ENCODE measurements at regions of chr1 and their contacts with region 1.

Region 1: DNA sequence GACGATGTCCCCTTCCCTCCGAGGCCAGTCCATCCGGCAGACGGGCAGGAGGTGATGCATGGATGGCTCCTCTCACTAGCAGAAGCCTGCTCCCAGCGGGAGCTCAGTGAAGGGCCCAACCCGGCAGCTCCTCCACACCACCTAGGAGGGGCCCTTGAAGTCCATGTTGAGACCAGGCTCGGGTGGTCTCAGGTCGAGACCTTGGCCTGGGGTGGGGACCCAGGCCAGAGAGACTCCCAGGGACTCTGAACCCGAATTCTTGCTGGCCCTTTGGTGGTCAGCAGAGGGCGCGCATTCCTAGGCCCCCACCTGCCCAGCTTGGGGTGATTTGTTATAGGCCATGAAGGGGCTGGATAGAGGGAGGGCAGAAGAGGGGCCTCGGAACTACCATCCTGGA is 642 bp upstream of the NT5C1A start:
- DNase-seq: peak in 1 of 2 experiments; percentile 81
- H3K4me3 ChIP-seq: peak overlapping the region; percentile 27 to 61 (median 36); a peak in 5 of 8 replicates
- H3K27ac ChIP-seq: no peak overlapping the region
- H3K4me1 ChIP-seq: peaks cover 0 to 11% (median 5%) of the 10 kb centered on the region in 4 experiments; a peak in 5 of 7 replicates
- H3K27me3 ChIP-seq: peaks cover 67 to 93% (median 87%) of the 10 kb centered on the region in 4 experiments
- CTCF ChIP-seq: peak; percentile 67 to 81 (median 74)
- EP300 ChIP-seq: no peak
- POLR2A ChIP-seq: no peak
- RAD21 ChIP-seq: peak; percentile 51 to 69

Region 2: GRCh38 chr1:39609618-39610331 is 62.8 kb before region 1 on chr1:
- CTCF ChIA-PET with region 1: interaction called, 67 read pairs
- POLR2A ChIA-PET with region 1: interaction called, 3 read pairs
- DNase-seq: peak; percentile 58 to 97
- H3K4me3 ChIP-seq: peak overlapping the region; percentile 59 to 71 (median 60)
- H3K27ac ChIP-seq: no peak overlapping the region
- H3K4me1 ChIP-seq: peaks cover 0 to 5% (median 0%) of the 10 kb centered on the region in 4 experiments; a peak in 2 of 7 replicates
- H3K27me3 ChIP-seq: peaks cover 0 to 13% (median 8%) of the 10 kb centered on the region in 4 experiments; a peak in 6 of 7 replicates
- CTCF ChIP-seq: peak; percentile 90 to 97 (median 91)
- EP300 ChIP-seq: no peak
- POLR2A ChIP-seq: no peak
- RAD21 ChIP-seq: peak; percentile 46 to 62

Region 3: DNA sequence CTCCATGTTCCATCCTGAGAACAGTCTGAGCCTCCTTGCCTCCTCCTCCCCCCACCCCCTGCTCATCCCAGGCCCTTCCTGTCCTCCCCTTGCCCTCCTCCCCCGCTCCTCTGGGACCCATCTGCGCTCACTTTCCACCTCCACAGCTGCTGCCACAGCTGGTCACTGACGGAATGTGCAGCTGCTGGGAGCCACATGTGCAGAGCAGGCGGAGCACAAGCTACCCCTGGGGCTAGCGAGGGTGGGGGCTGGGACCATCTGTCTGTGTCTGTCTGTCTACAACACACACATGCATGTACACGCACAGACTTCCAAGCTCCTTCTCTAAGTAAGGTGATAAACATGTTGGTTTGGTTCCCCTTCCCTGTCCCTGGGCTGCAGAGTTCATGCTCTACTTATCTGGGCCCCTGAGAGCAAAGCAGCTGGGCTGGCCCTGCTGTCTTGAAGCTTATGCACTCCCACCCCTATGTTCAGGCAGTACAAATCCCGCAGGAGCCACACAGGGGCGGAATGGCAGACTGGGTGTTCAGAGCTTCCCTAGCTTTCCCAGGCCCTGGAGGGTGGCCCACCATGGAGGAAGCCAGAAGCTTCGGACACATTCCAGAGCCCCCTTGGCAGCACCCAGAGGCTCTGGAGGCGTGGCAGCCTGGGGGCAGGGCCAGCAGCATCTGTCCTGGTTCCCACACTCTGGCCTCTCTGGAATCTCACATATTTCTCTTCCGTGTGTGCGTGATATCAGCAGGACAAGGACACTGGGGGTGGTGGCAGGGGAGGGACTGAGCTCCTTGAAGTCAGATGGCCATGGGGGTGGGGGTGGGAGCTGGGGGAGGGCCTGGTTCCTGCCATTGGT is 26.1 kb before region 1 on chr1:
- CTCF ChIA-PET with region 1: interaction called, 14 read pairs
- POLR2A ChIA-PET with region 1: no interaction called
- DNase-seq: peak in 1 of 2 experiments; percentile 61
- H3K4me3 ChIP-seq: no peak overlapping the region
- H3K27ac ChIP-seq: no peak overlapping the region
- H3K4me1 ChIP-seq: peaks cover 0 to 6% (median 5%) of the 10 kb centered on the region in 4 experiments; a peak in 6 of 7 replicates
- H3K27me3 ChIP-seq: peaks cover 0 to 10% (median 1%) of the 10 kb centered on the region in 4 experiments; a peak in 2 of 7 replicates
- CTCF ChIP-seq: peak in 2 of 3 experiments; percentile 36 to 39; a peak in 3 of 4 replicates
- EP300 ChIP-seq: no peak
- POLR2A ChIP-seq: no peak
- RAD21 ChIP-seq: no peak

Region 4: DNA sequence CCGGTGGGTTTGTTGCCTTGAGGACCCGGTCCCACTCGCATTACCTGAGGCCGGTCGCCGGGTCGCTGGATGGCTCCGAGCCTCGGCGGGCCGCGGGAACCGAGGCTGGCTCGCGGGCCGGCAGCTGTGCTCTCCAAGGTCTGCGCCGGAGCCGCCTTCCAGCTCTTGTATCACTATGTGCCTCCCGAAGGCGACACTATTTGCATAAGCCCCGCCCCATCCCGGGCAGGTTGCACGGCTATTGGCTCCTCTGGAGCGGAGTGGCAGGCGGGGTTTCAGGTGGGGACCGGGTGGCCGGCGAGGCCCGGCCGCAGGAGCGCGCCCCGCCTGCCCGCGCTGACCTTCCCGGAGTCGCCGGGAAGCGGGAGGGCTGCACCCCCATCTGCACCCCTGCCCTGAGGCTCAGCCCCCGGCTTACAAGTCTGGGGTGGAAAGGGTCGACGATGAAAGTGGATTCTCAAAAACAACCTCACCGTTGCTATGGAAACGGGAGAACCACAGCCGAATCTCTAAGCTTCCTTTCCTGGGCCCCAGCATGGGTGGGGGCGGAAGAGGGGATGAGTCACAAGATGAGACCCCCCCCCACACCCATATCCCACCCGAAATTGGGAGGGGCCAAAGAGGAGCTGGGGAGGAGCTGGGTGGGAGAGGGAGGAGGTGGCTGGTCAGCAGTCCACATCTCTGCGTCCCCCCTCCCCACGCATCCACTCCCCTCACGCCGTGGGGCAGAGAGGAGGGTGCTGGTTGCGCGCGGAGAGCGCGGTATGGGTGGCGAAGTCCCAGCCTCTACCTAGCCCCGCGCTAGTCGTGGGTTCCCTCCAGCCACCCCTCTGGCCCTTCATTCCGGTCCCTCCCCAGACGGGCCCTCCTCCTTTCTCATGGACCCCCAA is 19.0 kb after region 1 on chr1 and contains the start of gene HPCAL4:
- CTCF ChIA-PET with region 1: interaction called, 40 read pairs
- POLR2A ChIA-PET with region 1: interaction called, 15 read pairs
- DNase-seq: peak; percentile 77 to 97
- H3K4me3 ChIP-seq: peak within 1 kb of the TSS; percentile 8 to 56 (median 22); a peak in 7 of 8 replicates
- H3K27ac ChIP-seq: no peak within 1 kb of the TSS
- H3K4me1 ChIP-seq: peaks cover 0 to 19% (median 7%) of the 10 kb centered on the region in 4 experiments; a peak in 5 of 7 replicates
- H3K27me3 ChIP-seq: peaks cover 75 to 99% (median 87%) of the 10 kb centered on the region in 4 experiments
- CTCF ChIP-seq: no peak
- EP300 ChIP-seq: no peak
- POLR2A ChIP-seq: no peak
- RAD21 ChIP-seq: no peak
- total RNA-seq, gene HPCAL4: 0.46 and 0.54 TPM in 2 replicates

Region 5: GRCh38 chr1:39711104-39711965 is 38.8 kb after region 1 on chr1:
- CTCF ChIA-PET with region 1: interaction called, 78 read pairs
- POLR2A ChIA-PET with region 1: interaction called, 5 read pairs
- DNase-seq: no peak
- H3K4me3 ChIP-seq: no peak overlapping the region
- H3K27ac ChIP-seq: no peak overlapping the region
- H3K4me1 ChIP-seq: peaks cover 3 to 15% (median 4%) of the 10 kb centered on the region in 4 experiments; a peak in 5 of 7 replicates
- H3K27me3 ChIP-seq: peaks cover 88 to 100% (median 96%) of the 10 kb centered on the region in 4 experiments
- CTCF ChIP-seq: peak in 1 of 3 experiments; percentile 8; a peak in 1 of 4 replicates
- EP300 ChIP-seq: no peak
- POLR2A ChIP-seq: no peak
- RAD21 ChIP-seq: no peak

Region 6: GRCh38 chr1:39738622-39739366 is 66.2 kb after region 1 on chr1 and contains the start of gene PPIE:
- CTCF ChIA-PET with region 1: interaction called, 17 read pairs
- POLR2A ChIA-PET with region 1: interaction called, 3 read pairs
- DNase-seq: peak; percentile 79 to 91
- H3K4me3 ChIP-seq: peak within 1 kb of the TSS; percentile 85 to 97 (median 90)
- H3K27ac ChIP-seq: peak within 1 kb of the TSS; percentile 81
- H3K4me1 ChIP-seq: peaks cover 0 to 7% (median 2%) of the 10 kb centered on the region in 4 experiments; a peak in 3 of 7 replicates
- H3K27me3 ChIP-seq: peaks cover 2 to 40% (median 20%) of the 10 kb centered on the region in 4 experiments
- CTCF ChIP-seq: no peak
- EP300 ChIP-seq: no peak
- POLR2A ChIP-seq: peak in 1 of 2 experiments; percentile 84; a peak in 2 of 3 replicates
- RAD21 ChIP-seq: no peak
- total RNA-seq, gene PPIE: 38.9 and 40.2 TPM in 2 replicates

Region 7: DNA sequence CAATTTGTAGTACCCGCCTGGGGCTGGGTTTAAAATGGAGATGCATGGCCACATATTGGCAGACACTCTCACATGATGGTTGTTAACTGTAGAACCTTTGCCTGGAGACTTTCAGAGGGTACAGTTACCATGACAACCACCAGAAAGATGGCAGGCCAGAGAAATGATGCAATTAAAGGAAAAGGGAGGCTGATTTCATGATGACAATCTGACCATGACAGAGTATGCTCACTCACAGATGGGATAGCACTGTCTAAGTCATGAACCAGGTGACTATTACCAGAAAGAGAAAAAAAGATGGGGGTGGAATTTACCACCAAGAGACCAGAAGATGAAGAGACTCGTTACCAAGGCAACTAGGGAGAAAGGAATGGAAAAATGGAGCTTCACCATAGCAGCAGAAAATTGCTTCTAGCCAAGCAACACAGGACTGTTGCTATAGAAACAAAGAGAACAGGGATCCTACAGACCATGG is 214.2 kb after region 1 on chr1:
- CTCF ChIA-PET with region 1: no interaction called
- POLR2A ChIA-PET with region 1: no interaction called
- DNase-seq: no peak
- H3K4me3 ChIP-seq: no peak overlapping the region
- H3K27ac ChIP-seq: no peak overlapping the region
- H3K4me1 ChIP-seq: peaks cover 0 to 11% (median 4%) of the 10 kb centered on the region in 4 experiments; a peak in 4 of 7 replicates
- H3K27me3 ChIP-seq: no peaks in the 10 kb centered on the region
- CTCF ChIP-seq: no peak
- EP300 ChIP-seq: no peak
- POLR2A ChIP-seq: no peak
- RAD21 ChIP-seq: no peak

Measured in H1 (cell line).